Activated B cell treated with CpG ODN at 0.5 μM for 24 hours (primary cell): ENCODE measurements at regions of chr11 and their contacts with region 1.

Region 1: GRCh38 chr11:45804761-45805304 is at the start of gene SLC35C1:
- DNase-seq: peak; percentile 95
- ATAC-seq: peak; percentile 96
- H3K4me3 Mint-ChIP-seq: peak within 1 kb of the TSS; percentile 92
- H3K27ac Mint-ChIP-seq: peak within 1 kb of the TSS; percentile 78
- H3K4me1 Mint-ChIP-seq: peaks cover 41% of the 10 kb centered on the region
- H3K27me3 Mint-ChIP-seq: no peaks in the 10 kb centered on the region
- CTCF ChIP-seq: no peak
- total RNA-seq, gene SLC35C1: 8.6 and 8.8 TPM in 2 replicates

Region 2: GRCh38 chr11:45025716-45026492 is 778.9 kb before region 1 on chr11:
- CTCF ChIA-PET with region 1: no interaction called
- POLR2A ChIA-PET with region 1: no interaction called
- intact Hi-C with region 1: loop called (anchors 10 kb)
- DNase-seq: peak; percentile 48
- ATAC-seq: peak; percentile 46
- H3K4me3 Mint-ChIP-seq: peak overlapping the region; percentile 54
- H3K27ac Mint-ChIP-seq: peak overlapping the region; percentile 93
- H3K4me1 Mint-ChIP-seq: peaks cover 65% of the 10 kb centered on the region
- H3K27me3 Mint-ChIP-seq: no peaks in the 10 kb centered on the region
- CTCF ChIP-seq: no peak

Region 3: GRCh38 chr11:45756384-45757010 is 48.3 kb before region 1 on chr11:
- CTCF ChIA-PET with region 1: no interaction called
- POLR2A ChIA-PET with region 1: no interaction called
- intact Hi-C with region 1: no loop called
- DNase-seq: no peak
- ATAC-seq: no peak
- H3K4me3 Mint-ChIP-seq: no peak overlapping the region
- H3K27ac Mint-ChIP-seq: no peak overlapping the region
- H3K4me1 Mint-ChIP-seq: no peaks in the 10 kb centered on the region
- H3K27me3 Mint-ChIP-seq: peaks cover 33% of the 10 kb centered on the region
- CTCF ChIP-seq: no peak

Region 4: DNA sequence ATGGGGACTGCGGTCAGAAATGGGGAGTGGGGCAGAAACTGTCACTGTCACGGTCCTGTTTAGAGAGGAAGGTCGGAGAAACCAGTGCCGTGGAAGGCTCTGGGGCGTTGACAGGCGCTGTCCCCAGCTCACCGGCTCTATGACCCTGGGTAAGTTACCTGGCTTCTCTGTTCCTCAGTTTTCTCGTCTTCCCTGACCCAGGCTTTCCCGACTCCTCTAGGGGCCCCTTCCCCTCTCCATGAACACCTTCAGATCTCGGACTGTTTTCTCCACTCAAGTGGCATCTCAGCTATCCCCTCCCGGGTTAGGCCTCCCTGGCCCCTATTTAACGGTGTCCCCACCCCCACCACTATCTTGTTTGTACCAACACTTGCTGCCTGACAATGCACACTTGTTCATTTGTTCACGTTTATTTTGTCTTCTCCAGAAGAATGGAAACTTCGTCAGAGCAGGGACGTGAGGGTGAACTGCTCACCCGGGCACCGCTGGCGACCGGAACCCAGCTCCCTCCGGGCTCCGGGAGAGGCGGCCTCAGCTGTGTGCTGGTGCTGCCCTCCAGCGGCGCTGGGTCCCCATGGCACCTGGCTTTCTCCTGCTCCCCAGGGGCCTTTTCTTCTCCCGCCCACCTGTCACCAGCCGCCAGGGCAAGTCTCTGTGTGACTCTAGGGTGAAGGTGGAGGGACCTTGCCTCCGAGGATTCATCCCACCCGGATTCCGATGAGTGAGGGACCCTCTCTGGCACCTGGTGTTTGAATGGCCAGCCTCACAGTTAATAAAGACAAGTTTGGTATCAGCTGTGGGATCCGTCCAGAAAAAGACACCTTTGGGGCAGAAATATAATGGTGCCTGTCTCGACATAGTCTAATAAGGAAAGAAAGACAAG is 33.0 kb before region 1 on chr11:
- CTCF ChIA-PET with region 1: interaction called, 8 read pairs
- POLR2A ChIA-PET with region 1: no interaction called
- intact Hi-C with region 1: loop called (anchors 1 kb)
- DNase-seq: peak; percentile 71
- ATAC-seq: peak; percentile 88
- H3K4me3 Mint-ChIP-seq: peak overlapping the region; percentile 89
- H3K27ac Mint-ChIP-seq: peak overlapping the region; percentile 64
- H3K4me1 Mint-ChIP-seq: peaks cover 9% of the 10 kb centered on the region
- H3K27me3 Mint-ChIP-seq: peaks cover 3% of the 10 kb centered on the region
- CTCF ChIP-seq: no peak

Region 5: DNA sequence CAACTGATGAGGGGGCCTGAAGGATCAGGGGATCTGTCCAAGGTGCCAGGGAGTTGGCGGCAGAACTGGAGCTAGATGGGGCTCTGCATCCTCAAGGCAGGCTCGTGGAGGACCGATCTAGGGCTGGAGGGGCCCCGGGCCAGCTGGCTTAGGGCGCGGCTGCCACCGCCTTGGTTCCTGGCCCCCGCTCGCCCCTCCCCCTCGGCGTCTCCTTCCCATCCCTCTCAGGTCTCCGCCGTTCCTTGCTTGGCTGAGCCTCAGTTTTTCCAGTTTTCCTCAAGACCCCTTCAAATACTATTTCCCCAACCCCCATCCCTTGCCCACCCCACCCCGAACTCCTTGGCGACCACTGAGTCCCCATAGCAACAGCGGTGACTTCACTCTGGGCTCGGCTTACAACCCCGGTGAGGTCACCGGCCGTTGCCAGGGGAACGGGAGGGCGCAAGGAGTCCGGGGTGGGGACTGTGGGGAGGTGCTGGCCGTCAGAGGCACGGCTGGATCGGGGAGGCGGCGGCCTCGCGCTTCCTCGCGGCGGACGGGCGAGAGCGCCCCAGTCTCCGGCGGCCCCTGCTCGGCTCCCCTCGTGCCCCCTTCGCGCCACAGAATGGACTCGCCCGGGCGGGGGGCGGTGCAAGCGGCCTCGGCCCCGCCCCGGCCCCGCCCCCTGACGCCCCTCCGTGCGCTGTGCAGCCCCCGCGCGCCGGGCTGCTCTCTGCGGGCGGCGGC is 94.8 kb after region 1 on chr11:
- CTCF ChIA-PET with region 1: no interaction called
- POLR2A ChIA-PET with region 1: no interaction called
- intact Hi-C with region 1: loop called (anchors 1 kb)
- DNase-seq: peak; percentile 74
- ATAC-seq: peak; percentile 87
- H3K4me3 Mint-ChIP-seq: peak overlapping the region; percentile 76
- H3K27ac Mint-ChIP-seq: no peak overlapping the region
- H3K4me1 Mint-ChIP-seq: peaks cover 8% of the 10 kb centered on the region
- H3K27me3 Mint-ChIP-seq: peaks cover 25% of the 10 kb centered on the region
- CTCF ChIP-seq: no peak

Region 6: DNA sequence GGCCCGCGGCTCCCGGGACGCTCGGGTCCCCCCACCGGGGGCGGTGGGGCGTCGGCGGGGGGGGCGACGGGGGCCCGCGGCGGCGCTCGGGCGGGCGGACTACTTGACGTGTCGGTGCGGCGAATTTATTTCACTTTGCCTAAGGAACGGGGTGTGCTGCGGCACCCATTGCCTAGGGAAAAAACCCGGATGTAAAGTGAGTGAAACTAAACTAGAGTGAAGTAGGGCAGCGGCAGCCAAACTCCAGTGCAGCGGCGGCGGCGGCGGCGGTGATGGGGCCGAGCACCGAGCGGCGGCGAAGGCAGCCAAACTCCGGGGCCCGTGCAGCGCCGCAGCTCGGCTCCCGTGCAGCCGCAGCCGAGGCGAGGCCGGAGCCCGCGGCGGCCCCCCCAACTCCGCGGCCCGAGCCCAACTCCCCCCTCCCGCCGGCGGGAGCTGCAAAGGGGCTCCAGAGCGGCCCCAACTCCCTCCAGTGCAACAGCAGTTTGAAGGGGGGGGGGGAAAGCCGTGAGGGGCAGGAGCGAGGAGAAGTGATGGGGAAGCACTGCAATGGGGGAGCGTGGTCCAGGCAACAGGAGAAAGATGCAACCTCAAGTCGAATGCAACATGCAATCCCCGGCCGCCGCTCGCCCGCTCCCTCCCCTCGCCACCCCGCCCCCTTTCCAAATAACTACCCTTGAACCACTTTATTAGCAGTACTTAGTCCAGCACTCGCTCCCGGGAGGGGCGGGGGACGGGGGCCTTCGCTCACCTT is 317.1 kb after region 1 on chr11:
- CTCF ChIA-PET with region 1: no interaction called
- POLR2A ChIA-PET with region 1: interaction called, 3 read pairs
- intact Hi-C with region 1: loop called (anchors 2 kb)
- DNase-seq: no peak
- ATAC-seq: peak; percentile 47
- H3K4me3 Mint-ChIP-seq: peak overlapping the region; percentile 87
- H3K27ac Mint-ChIP-seq: peak overlapping the region; percentile 91
- H3K4me1 Mint-ChIP-seq: peaks cover 30% of the 10 kb centered on the region
- H3K27me3 Mint-ChIP-seq: no peaks in the 10 kb centered on the region
- CTCF ChIP-seq: no peak

Region 7: DNA sequence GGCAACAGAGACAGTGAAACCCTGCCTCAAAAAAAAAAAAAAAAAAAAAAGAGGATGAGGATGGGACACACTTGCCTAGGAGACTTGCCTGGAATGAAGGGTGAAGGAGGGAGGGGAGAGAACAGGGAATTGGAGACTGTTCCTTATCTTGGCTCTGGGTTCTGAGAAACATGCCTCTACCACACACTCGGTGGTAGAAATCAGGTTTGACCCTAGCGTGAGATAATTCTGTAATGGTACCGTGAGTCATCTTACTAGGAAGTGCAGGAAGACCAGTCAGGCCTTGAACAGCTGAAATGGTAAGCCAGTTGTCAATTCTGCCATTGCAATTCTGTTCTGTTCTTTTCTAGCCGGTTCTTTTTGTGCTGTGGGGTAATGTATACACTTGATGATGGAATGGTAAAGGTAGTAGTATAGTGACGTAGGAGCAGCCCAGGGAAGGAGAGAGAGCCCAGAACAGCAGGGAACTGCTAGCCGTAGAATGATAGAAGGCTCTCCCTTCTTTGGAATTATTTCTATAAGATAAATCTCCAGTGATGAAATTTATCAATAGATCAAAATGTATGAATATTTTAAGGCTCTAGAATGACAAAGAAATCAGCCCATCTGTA is 792.9 kb after region 1 on chr11:
- CTCF ChIA-PET with region 1: no interaction called
- POLR2A ChIA-PET with region 1: no interaction called
- intact Hi-C with region 1: no loop called
- DNase-seq: no peak
- ATAC-seq: no peak
- H3K4me3 Mint-ChIP-seq: no peak overlapping the region
- H3K27ac Mint-ChIP-seq: no peak overlapping the region
- H3K4me1 Mint-ChIP-seq: peaks cover 15% of the 10 kb centered on the region
- H3K27me3 Mint-ChIP-seq: no peaks in the 10 kb centered on the region
- CTCF ChIP-seq: no peak